T-cell (primary cell): ENCODE measurements at regions of chr11 and their contacts with region 1.

Region 1: DNA sequence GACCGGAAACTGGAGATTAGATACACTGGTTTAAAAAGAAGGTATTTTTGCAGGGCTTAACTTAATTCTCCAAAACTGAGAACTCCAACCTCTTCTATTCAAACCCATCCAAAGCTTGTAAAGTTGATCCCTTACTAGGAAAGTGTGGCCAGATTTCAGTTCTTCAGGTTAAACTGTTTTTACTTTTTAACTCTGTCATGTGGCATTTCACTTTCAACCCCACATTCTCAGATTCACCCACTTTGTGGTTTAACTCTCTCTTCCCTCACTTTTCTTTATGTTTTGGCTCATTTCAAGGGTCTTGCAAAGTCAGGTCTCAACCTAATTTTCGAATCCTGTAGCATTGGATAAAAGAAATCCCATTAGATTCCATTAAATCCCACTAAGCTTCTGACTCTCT is 75.4 kb downstream of the MPPED2 start:
- DNase-seq: no peak
- ATAC-seq: no peak
- H3K4me3 ChIP-seq: no peak overlapping the region
- H3K4me3 Mint-ChIP-seq: peak overlapping the region in 1 of 3 donors; percentile 34
- H3K27ac ChIP-seq: no peak overlapping the region
- H3K27ac Mint-ChIP-seq: no peak overlapping the region
- H3K4me1 ChIP-seq: peaks cover 0 to 7% of the 10 kb centered on the region in 2 experiments
- H3K4me1 Mint-ChIP-seq: peaks cover 0 to 14% (median 6%) of the 10 kb centered on the region in 3 donors
- H3K27me3 ChIP-seq: no peaks in the 10 kb centered on the region
- H3K27me3 Mint-ChIP-seq: peaks cover 0 to 4% of the 10 kb centered on the region in 2 donors

Region 2: GRCh38 chr11:30432178-30432577 is 78.6 kb before region 1 on chr11:
- CTCF ChIA-PET with region 1: no interaction called
- POLR2A ChIA-PET with region 1: no interaction called
- DNase-seq: no peak
- ATAC-seq: no peak
- H3K4me3 ChIP-seq: no peak overlapping the region
- H3K4me3 Mint-ChIP-seq: no peak overlapping the region
- H3K27ac ChIP-seq: no peak overlapping the region
- H3K27ac Mint-ChIP-seq: no peak overlapping the region
- H3K4me1 ChIP-seq: no peaks in the 10 kb centered on the region
- H3K4me1 Mint-ChIP-seq: no peaks in the 10 kb centered on the region
- H3K27me3 ChIP-seq: no peaks in the 10 kb centered on the region
- H3K27me3 Mint-ChIP-seq: peaks cover 3 to 10% of the 10 kb centered on the region in 2 donors

Region 3: DNA sequence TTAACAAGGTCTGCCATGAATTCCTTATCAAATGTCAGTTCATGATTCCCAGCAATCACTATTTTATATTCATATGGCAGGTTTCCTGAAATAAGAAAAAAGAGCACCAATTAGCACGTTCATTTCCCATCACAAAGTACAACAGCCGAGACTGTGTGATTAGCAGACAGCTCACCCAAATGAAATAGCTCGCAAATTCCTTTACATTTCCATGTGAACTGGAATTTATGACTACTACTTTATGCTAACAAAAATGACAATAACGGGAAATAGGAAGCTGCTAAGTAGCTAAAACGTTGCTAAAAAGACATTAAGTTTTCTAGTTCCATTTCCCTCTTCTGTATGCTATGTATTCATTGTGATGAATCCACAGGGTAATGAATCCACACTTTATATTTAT is 15.3 kb before region 1 on chr11:
- CTCF ChIA-PET with region 1: no interaction called
- POLR2A ChIA-PET with region 1: no interaction called
- DNase-seq: no peak
- ATAC-seq: no peak
- H3K4me3 ChIP-seq: no peak overlapping the region
- H3K4me3 Mint-ChIP-seq: no peak overlapping the region
- H3K27ac ChIP-seq: no peak overlapping the region
- H3K27ac Mint-ChIP-seq: no peak overlapping the region
- H3K4me1 ChIP-seq: no peaks in the 10 kb centered on the region
- H3K4me1 Mint-ChIP-seq: no peaks in the 10 kb centered on the region
- H3K27me3 ChIP-seq: no peaks in the 10 kb centered on the region
- H3K27me3 Mint-ChIP-seq: no peaks in the 10 kb centered on the region

Region 4: GRCh38 chr11:30526558-30526957 is 15.8 kb after region 1 on chr11:
- CTCF ChIA-PET with region 1: no interaction called
- POLR2A ChIA-PET with region 1: interaction called in 1 of 2 experiments, 13 read pairs
- DNase-seq: no peak
- ATAC-seq: no peak
- H3K4me3 ChIP-seq: no peak overlapping the region
- H3K4me3 Mint-ChIP-seq: no peak overlapping the region
- H3K27ac ChIP-seq: no peak overlapping the region
- H3K27ac Mint-ChIP-seq: no peak overlapping the region
- H3K4me1 ChIP-seq: no peaks in the 10 kb centered on the region
- H3K4me1 Mint-ChIP-seq: no peaks in the 10 kb centered on the region
- H3K27me3 ChIP-seq: peaks cover 0 to 2% of the 10 kb centered on the region in 2 experiments
- H3K27me3 Mint-ChIP-seq: no peaks in the 10 kb centered on the region

Region 5: DNA sequence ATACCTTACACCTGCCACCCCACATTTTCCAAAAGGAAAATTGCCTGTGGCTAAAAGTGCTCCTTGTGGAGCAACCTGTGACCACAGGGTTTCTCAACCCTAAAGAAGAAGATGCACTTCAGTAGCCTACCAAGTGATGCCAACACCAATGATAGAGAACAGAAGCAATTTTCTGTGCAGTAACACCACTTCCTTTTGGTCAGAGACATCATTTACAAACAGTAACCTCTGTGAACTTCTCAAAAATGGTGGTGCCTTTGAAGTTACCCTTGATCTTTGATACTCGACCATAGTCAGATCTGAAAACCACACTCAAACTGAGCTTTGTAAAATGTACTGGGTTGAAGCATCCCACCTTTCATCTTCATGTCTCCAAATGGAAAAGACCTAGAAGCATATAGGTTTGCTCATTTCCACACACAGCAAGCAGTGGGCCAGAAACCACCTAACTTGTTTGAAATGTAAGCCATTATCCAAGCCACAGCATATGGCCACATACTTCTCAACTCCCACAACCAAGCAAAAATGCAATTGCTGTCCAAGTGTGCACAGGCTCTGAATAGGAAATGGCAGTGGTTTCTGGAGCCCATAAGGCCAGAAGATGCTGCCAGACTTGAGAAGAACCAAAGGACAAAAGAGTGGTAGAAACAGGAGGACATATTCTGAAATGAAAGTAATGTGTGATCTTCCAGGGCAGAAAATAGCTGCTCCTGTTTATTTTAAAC is 51.1 kb after region 1 on chr11:
- CTCF ChIA-PET with region 1: no interaction called
- POLR2A ChIA-PET with region 1: no interaction called
- DNase-seq: no peak
- ATAC-seq: no peak
- H3K4me3 ChIP-seq: no peak overlapping the region
- H3K4me3 Mint-ChIP-seq: no peak overlapping the region
- H3K27ac ChIP-seq: no peak overlapping the region
- H3K27ac Mint-ChIP-seq: no peak overlapping the region
- H3K4me1 ChIP-seq: no peaks in the 10 kb centered on the region
- H3K4me1 Mint-ChIP-seq: no peaks in the 10 kb centered on the region
- H3K27me3 ChIP-seq: no peaks in the 10 kb centered on the region
- H3K27me3 Mint-ChIP-seq: no peaks in the 10 kb centered on the region